ENCODE measurements at regions of chr14 and their contacts with region 1.

Region 1: GRCh38 chr14:23041729-23042128 is 283 bp upstream of the PSMB11 start:
- DNase-seq: no peak
- ATAC-seq: no peak
- H3K4me3 Mint-ChIP-seq: no peak overlapping the region
- H3K27ac Mint-ChIP-seq: no peak overlapping the region
- H3K4me1 Mint-ChIP-seq: no peaks in the 10 kb centered on the region
- H3K27me3 Mint-ChIP-seq: peaks cover 3% of the 10 kb centered on the region

Region 2: DNA sequence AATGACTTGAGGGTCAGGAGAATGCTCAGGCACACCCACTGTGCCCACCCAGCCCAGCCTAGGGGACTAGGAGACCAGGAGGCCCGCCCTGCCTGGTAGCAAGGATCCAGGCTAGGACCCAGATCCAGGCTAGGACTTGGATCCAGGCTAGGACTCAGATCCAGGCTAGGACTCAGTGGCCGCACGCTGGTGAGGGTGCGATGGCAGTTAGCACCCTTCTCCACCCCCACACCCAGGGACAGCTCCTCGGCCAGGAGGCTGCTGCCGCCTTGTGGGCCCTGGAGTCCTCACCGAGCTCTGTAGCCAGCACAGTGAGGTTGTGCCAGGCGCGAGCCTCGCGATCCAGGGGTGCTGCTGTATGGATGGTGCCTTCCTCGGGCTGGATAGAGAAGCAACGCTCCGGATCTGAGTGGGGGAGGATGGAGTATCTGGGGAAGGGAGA is 10.5 kb after region 1 on chr14:
- CTCF ChIA-PET with region 1: interaction called, 16 read pairs
- DNase-seq: no peak
- ATAC-seq: no peak
- H3K4me3 Mint-ChIP-seq: no peak overlapping the region
- H3K27ac Mint-ChIP-seq: no peak overlapping the region
- H3K4me1 Mint-ChIP-seq: peaks cover 12% of the 10 kb centered on the region
- H3K27me3 Mint-ChIP-seq: peaks cover 8% of the 10 kb centered on the region

Measured in activated CD8-positive, alpha-beta memory T cell treated with anti-CD3 and anti-CD28 coated beads, Interleukin-2, amount 10 ng/mL, durations not matched to agents 7 days and 5 days (primary cell).